ENCODE measurements at regions of chrX and their contacts with region 1.

Region 1: GRCh38 chrX:105975382-105975781 is 63.1 kb downstream of the SERPINA7 start:
- DNase-seq: no peak
- ATAC-seq: no peak

Region 2: GRCh38 chrX:106144755-106145639 is 169.6 kb after region 1 on chrX:
- intact Hi-C with region 1: no loop called
- DNase-seq: peak; percentile 58
- ATAC-seq: peak; percentile 93

Region 3: DNA sequence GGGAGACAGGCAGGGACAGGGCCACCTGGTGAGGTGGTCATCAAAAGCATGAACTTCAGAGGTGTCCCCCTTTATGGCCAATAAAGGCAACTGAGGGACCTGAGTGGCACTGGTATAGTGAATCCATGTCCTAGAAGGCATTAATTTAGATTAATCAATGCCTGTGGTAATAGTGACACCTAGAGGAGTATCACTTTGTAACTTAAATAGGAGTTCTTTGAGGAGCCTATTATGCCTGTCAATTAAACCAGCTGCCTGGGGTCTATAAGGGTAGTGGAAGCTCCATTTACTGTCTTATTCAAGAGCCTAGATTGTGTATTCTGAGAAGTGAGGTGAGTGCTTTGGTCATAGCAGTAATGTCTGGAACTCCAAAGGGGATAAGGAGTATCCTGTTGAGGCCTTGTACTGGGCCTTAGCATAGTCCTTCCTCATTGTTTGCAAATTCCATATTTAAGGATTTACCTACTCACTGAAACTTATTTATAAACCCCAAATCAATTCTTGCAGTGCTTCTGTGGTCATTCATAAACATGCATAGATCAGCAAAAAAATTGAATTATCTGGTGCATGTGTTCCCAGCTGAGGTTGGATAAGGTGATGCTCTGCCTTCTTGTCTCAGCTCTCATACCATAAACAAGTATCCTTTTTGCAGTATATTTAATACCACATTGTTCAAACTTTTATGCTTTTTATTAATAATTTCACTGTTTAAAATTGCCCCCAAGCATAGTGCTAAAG is 422.6 kb after region 1 on chrX:
- intact Hi-C with region 1: loop called (anchors 10 kb)
- DNase-seq: no peak
- ATAC-seq: no peak